Activated CD4-positive, alpha-beta T cell treated with anti-CD3 and anti-CD28 coated beads, Interleukin-2, amount 10 ng/mL, durations not matched to agents 24 days and 14 days (primary cell): ENCODE measurements at regions of chr3 and their contacts with region 1.

Region 1: GRCh38 chr3:189298469-189299375 is 127.0 kb downstream of the TPRG1 start:
- DNase-seq: no peak
- H3K4me3 Mint-ChIP-seq: peak overlapping the region; percentile 59
- H3K27ac Mint-ChIP-seq: peak overlapping the region; percentile 91
- H3K4me1 Mint-ChIP-seq: peaks cover 45% of the 10 kb centered on the region
- H3K27me3 Mint-ChIP-seq: no peaks in the 10 kb centered on the region

Region 2: DNA sequence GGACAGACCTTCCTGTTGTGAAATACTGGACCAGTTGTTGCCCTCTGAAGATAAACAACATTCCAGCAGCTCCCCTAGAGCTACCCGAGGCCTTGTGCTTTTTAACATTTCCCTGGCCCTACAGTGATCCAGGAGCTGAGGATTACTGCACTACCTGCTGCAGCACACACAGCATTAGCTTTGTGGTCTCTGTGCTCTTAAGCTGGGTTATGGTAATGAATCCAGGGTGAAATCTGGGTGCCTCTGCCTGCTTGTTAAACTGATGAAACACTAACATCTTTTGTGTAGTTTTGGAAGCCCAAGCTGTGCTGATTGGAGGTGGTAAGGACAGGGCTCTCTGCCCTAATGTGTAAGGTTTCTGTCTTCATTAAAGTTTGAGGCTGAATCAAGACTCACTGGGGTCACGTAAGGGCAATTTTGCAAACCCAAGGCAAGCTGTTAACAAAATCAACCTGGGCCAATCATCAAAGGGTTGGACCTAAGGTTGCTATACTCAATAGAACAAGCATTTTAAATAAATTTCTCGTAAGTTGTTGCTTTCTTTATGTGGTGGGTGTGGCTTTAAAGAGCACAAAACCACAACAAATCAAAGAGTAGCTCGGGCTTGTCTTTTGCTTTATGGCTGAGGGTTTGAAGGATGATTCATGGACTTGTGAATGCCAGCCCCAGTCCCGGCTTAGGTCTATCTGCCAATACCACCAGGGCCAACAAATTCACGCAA is 56.9 kb after region 1 on chr3:
- intact Hi-C with region 1: loop called (anchors 5 kb)
- DNase-seq: peak; percentile 81
- H3K4me3 Mint-ChIP-seq: peak overlapping the region; percentile 65
- H3K27ac Mint-ChIP-seq: peak overlapping the region; percentile 85
- H3K4me1 Mint-ChIP-seq: peaks cover 26% of the 10 kb centered on the region
- H3K27me3 Mint-ChIP-seq: no peaks in the 10 kb centered on the region

Region 3: DNA sequence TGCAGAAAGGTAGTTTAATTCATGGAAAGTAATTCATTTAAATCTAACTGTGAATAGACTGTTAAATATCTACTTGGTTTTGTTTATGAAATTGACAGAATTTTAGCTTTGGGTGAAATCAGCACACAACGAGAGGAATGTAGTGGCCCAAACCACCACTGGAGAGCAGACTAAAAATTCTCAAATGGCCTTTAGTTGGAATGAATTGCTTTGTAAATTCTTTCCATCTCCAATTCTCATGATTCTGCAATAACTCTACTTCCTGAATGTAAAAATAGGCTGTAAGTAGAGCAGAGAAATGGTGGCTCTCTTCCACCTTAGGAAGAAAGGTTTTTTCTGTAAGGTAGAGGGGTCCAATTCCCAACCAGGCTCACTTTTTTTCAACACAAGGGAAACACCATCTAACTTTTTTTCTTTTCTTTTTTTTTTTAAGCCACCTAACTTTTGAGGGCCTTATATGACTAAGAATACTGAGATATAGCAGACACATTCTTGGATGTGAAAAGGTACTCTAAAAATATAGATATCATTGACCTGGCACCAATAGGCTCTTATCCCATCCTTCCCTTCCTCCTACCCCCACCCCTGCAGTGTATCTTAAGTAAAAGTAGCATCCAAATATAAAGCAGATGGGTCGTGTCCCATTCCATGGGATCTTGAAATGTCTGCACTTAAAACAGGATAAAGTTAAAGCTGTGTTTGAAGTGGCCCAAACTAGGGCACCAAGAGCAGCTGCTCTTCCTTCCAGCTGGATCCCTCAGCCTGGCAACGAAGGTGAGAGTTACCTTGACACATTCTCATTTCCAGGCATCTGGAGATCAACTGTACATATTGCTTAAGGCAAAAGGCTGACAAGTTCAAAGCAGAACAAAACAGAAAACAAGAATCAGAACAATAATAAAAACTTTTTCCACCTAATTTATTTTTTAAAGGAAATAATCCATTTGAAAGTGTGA is 67.2 kb after region 1 on chr3:
- intact Hi-C with region 1: no loop called
- DNase-seq: no peak
- H3K4me3 Mint-ChIP-seq: no peak overlapping the region
- H3K27ac Mint-ChIP-seq: no peak overlapping the region
- H3K4me1 Mint-ChIP-seq: peaks cover 30% of the 10 kb centered on the region
- H3K27me3 Mint-ChIP-seq: no peaks in the 10 kb centered on the region